ENCODE measurements at regions of chr21 and their contacts with region 1.

Region 1: DNA sequence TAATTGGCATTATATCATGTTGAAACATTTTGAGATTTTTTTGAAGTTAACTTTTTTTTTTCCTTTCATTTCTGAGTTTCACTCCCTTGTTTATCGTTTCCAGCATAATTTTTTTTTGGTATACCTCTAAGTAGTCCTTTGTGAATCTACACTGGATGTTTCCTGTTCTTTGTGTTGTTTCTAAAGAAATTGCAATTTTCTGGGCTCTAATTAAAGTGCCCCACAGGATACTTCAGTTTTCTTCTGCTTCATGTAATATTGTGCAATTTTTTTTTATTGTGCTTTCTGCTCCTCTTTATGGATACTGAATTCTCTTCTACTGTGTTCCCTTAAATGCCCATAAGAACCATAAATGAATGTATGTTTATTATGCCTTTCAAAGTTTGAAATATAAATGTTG is 132.0 kb upstream of the DSCAM start:
- DNase-seq: no peak

Region 2: DNA sequence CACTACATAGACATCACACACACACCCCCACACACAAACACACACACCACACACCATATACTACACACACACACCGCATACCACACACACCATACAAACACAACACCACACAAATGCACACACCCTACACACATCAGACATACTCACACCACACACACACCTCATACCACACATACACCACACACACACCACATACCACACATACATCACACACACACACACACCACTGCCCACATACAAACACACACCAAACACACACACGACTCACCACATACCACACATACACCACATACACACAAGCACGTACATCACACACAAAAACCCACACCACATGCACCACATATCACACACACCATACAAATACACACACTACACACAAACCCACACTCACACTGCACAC is 14.9 kb after region 1 on chr21:
- intact Hi-C with region 1: loop called in 1 of 2 experiments (anchors 1 kb)
- DNase-seq: no peak

Measured in posterior vena cava (tissue), 2 donors.